Testis (tissue), 5 donors: ENCODE measurements at regions of chr6 and their contacts with region 1.

Region 1: GRCh38 chr6:31366693-31367470 is 9.9 kb upstream of the HLA-B start:
- DNase-seq: peak; percentile 93
- H3K4me3 ChIP-seq: peak overlapping the region; percentile 7 to 46
- H3K27ac ChIP-seq: no peak overlapping the region
- H3K4me1 ChIP-seq: no peaks in the 10 kb centered on the region
- H3K27me3 ChIP-seq: no peaks in the 10 kb centered on the region
- CTCF ChIP-seq: peak; percentile 94 to 97 (median 97)
- POLR2A ChIP-seq: no peak

Region 2: DNA sequence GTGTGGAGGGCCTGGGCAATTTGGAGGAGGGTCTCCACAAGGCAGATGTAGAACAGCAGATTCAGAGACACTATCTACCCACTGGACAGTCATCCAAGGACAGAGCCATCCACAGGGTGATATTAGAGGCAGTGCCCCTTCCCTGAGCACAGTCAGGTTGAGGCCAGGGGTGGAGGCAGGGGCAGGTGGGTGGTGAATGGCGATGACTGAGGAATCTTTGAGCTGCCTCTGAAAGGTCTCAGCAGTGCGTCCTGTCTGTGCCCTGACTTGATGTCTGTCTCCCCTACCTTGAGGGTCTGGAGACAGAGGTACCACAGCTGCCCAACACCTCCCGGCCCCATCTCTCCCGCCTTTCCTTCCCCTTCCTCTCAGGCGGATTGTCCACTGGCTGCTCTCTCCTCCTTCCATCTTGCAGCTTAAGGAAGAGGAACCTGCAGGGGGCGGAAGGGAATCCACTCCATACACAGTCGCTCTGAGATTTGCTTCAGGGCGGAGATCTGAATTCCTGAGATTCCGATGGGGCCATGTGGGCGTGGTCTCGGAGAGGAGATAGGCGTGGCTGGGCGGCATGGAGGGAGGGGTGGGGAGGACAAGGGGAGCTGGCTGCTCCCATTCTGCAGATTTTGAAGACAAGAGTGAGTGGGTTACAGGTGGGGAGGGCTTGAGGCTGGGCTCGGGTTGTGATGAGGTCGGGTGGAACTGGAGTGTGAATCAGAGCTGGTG is 424.4 kb before region 1 on chr6:
- intact Hi-C with region 1: no loop called
- DNase-seq: peak; percentile 89
- H3K4me3 ChIP-seq: no peak overlapping the region
- H3K27ac ChIP-seq: no peak overlapping the region
- H3K4me1 ChIP-seq: no peaks in the 10 kb centered on the region
- H3K27me3 ChIP-seq: no peaks in the 10 kb centered on the region
- CTCF ChIP-seq: peak in 2 of 3 experiments; percentile 25 to 44
- POLR2A ChIP-seq: no peak

Region 3: GRCh38 chr6:31143148-31143547 is 223.7 kb before region 1 on chr6:
- intact Hi-C with region 1: loop called (anchors 10 kb)
- DNase-seq: peak; percentile 46
- H3K4me3 ChIP-seq: no peak overlapping the region
- H3K27ac ChIP-seq: peak overlapping the region in 1 of 2 donors; percentile 15
- H3K4me1 ChIP-seq: no peaks in the 10 kb centered on the region
- H3K27me3 ChIP-seq: no peaks in the 10 kb centered on the region
- CTCF ChIP-seq: no peak
- POLR2A ChIP-seq: no peak

Region 4: DNA sequence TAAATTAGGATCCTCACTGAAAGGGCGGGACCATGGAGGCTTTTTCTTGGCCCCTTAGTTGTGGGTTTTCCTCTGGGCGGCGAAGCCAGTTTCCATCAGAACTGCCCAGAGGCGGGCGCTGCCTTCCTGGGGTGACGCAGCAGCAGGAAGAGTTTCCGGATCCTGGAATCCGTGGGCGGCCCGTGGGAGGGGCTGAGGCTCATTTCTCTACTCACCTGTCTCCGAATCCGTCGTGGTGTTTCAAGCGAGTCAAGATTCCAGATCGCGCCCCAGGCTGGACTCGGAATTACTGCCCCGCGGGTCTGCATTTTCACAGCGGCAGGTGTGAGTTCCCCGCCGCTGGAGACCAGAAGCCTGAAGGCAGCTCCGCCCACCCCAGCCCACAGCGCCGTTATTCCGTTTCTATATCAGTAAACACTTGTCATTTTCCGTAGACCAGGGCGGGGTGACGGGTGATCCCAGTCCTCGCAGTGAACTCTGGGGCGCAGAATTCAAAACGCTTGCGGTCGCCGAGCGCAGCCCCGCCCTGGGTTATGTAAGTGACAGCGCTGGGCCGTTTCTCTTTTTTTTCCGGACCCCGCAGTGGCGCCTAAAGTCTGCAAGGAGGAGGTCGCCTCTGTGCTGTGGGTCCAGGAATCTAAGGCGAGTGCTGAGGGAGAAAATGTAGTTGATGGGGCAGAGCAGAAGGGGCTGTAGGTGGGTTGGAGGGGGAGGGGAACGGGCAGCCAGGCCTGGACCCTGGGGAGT is 169.2 kb before region 1 on chr6:
- intact Hi-C with region 1: loop called (anchors 5 kb)
- DNase-seq: peak; percentile 93
- H3K4me3 ChIP-seq: peak overlapping the region; percentile 59 to 85
- H3K27ac ChIP-seq: peak overlapping the region; percentile 92 to 96
- H3K4me1 ChIP-seq: no peaks in the 10 kb centered on the region
- H3K27me3 ChIP-seq: no peaks in the 10 kb centered on the region
- CTCF ChIP-seq: no peak
- POLR2A ChIP-seq: peak; percentile 34